ENCODE measurements at regions of chr16 and their contacts with region 1.

Region 1: DNA sequence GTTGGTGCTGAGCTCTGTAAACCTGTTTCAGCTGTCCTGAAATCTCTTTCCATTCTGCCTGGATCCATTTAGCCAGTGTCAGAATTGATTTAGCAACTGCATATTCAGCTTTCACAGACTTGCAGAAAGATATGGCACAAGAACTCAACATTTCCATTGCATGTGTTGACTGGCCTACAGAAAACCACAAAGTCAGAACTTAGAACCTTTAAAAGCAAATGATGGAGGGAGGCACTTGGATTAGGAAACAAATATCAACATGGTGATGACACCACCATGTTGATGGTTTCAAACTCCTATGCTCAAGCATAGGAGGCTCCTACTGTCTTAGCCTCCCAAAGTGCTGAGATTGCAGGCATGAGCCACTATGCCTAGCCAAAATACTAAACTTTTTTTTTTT is 52.3 kb upstream of the ARL6IP1 start:
- DNase-seq: no peak
- ATAC-seq: no peak
- H3K4me3 ChIP-seq: no peak overlapping the region
- H3K4me1 ChIP-seq: no peaks in the 10 kb centered on the region
- CTCF ChIP-seq: no peak

Region 2: DNA sequence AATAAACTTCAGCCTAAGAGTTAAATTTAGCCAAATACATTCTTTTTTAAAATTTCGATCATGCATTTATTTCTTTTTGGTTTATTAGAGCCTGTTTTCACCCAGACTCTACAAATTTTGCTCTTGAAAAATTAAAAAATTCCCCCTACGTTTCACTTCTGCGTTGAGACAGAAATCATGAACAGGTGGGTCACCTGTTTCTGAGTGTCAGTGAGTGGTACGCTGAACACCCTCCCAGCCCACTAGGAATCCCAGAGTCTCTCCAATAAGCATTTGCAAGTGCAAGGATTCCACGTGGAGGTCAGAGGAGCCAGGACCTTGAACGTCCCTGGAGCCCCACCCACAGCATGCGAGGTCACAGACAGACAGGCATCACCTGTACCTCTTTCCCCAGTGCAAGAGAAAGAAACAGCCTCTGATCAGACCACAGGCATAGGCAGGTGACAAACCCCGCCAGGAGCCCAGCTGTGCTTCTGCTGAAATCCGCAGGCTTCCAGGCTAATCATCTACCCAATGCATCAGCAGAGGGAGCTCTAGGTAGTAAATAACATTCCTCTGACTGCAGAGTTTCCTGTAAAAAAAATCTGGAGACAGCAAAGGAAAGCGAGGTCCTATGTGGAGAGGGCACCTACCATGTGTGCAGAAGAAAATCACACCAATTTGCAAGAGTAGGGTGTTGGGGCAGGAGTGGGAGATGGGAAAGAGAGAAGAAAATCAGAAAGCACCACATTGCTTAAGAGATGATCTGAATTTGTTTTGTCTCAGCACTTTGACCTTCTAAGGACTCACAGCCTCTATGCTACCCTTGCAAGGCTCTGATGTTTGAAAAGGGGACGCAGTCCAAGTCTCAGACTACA is 1377.1 kb before region 1 on chr16:
- intact Hi-C with region 1: no loop called
- DNase-seq: peak; percentile 55 to 81 (median 61)
- ATAC-seq: peak; percentile 88
- H3K4me3 ChIP-seq: no peak overlapping the region
- H3K4me1 ChIP-seq: peaks cover 11% of the 10 kb centered on the region
- CTCF ChIP-seq: no peak

Region 3: DNA sequence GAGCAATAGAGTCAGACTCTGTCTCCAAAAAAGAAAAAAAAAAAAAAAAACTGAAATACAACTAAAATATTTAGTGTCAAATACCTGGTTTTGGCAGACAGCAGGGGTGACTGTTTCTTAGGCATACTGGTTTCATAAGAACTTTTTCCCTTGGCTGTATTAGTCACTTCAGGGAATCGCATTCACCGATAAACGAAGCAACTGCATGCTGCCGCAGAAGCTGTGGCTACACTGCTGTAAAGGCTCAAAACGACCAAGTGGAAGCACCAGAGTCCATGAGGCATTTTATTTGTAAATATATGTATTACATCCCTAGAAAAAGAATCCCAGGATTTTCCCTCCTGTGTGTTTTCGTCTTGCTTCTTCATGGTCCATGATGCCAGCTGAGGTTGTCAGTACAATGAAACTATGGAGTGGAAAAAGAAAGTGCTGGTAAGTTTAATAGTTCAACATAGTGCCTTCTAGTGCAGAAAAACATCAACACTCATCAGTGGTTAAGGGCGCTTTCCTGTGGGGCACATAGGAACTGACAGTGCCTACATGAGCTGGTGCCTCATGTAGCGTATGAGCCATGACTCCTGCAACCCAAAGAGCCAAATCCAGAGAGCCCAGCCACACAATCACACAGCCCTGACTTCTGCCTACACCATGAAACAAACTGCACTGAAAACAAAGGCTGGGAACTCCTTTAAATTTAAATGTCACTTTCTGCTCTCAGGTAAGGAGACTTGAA is 70.8 kb before region 1 on chr16:
- intact Hi-C with region 1: no loop called
- DNase-seq: no peak
- ATAC-seq: no peak
- H3K4me3 ChIP-seq: no peak overlapping the region
- H3K4me1 ChIP-seq: peaks cover 9% of the 10 kb centered on the region
- CTCF ChIP-seq: no peak

Region 4: DNA sequence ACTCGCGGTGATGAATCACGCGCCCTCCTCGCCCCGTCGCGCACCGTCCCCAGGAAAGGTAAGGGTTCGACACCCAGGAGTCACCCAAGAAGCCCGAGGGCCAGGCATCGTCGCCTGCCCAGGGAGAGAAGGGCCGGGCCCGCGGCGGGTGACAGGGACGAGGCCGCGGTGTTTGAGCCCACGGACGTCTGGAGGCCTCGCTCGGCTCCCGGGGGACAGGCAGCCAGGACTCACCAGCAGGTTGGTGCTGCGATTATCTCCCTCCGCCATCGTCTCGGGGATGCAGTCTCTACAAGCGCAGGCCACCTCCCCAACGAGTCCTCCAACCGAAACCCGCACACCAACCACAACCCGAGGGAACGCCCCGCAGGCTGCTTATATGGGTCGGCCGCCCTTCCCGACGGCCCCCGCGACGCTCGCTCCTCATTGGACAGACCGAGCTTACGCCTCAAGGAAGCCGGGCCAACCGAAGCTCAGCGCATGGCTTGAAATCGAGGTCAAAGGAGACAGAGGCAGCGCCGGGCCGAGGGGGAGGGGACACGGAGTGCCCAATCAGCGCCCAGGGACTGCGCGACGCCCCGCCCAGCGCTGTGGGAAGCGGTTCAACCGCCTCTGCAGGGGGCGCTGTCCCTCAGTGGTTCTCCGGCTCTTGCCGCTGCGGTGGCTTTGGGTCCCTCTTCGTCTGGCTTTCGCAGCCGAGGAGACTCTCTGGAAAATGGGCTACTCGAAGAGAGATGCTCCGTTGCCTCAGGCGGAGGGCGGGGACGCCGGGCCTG is 52.3 kb before region 1 on chr16 and contains the start of gene ARL6IP1:
- intact Hi-C with region 1: loop called in 1 of 2 experiments (anchors 10 kb)
- DNase-seq: peak; percentile 99 to 100 (median 99)
- ATAC-seq: peak; percentile 96
- H3K4me3 ChIP-seq: peak within 1 kb of the TSS; percentile 83
- H3K4me1 ChIP-seq: peaks cover 12% of the 10 kb centered on the region
- CTCF ChIP-seq: peak; percentile 94
- total RNA-seq, gene ARL6IP1: 88.6 to 168 (median 127) TPM

Region 5: GRCh38 chr16:19330841-19331397 is 477.2 kb after region 1 on chr16:
- intact Hi-C with region 1: no loop called
- DNase-seq: no peak
- ATAC-seq: no peak
- H3K4me3 ChIP-seq: no peak overlapping the region
- H3K4me1 ChIP-seq: no peaks in the 10 kb centered on the region
- CTCF ChIP-seq: no peak

Region 6: GRCh38 chr16:19948186-19949104 is 1094.8 kb after region 1 on chr16:
- intact Hi-C with region 1: no loop called
- DNase-seq: no peak
- ATAC-seq: no peak
- H3K4me3 ChIP-seq: no peak overlapping the region
- H3K4me1 ChIP-seq: no peaks in the 10 kb centered on the region
- CTCF ChIP-seq: no peak